Right cardiac atrium (tissue), 5 donors: ENCODE measurements at regions of chr9 and their contacts with region 1.

Region 1: GRCh38 chr9:109903515-109904138 is 123.6 kb downstream of the PALM2AKAP2 start:
- DNase-seq: peak in 2 of 3 donors; percentile 46 to 59
- ATAC-seq: peak in 1 of 2 donors; percentile 20
- H3K4me3 ChIP-seq: no peak overlapping the region
- H3K27ac ChIP-seq: no peak overlapping the region
- H3K4me1 ChIP-seq: peaks cover 5% of the 10 kb centered on the region
- H3K27me3 ChIP-seq: no peaks in the 10 kb centered on the region

Region 2: DNA sequence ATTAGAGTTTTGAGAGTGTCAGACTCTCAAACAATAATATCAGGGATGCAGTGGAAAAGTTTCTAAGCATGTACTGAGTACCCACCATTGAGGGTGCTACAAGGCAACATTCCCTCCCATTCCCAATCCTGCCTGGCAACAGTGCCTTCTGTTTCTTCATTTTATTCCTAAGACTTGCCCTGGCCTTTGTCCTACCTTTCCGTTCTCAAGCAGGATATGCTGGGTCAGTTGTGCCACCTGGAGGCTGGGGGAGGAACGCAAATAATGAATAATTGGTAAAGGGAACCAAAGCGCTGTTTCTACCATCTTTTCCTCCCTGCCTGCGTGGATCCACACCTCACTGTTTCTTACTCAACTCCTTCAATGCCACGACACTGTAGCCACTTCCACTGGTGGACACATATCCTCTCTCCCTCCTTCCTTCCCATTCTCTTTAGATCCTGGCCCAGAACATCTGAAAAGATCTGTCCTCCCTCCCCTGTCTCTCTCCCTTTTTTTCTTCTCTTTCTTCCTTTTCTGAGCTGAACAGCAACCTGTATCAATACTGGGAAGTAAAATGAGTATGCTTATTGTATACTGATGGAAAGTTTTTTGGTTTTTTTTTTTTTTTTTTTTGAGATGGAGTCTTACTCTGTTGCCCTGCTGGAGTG is 154.8 kb after region 1 on chr9:
- intact Hi-C with region 1: loop called in 2 of 4 experiments (anchors 10 kb)
- DNase-seq: peak in 2 of 3 donors; percentile 59 to 65
- ATAC-seq: peak; percentile 67 to 72
- H3K4me3 ChIP-seq: no peak overlapping the region
- H3K27ac ChIP-seq: no peak overlapping the region
- H3K4me1 ChIP-seq: no peaks in the 10 kb centered on the region
- H3K27me3 ChIP-seq: no peaks in the 10 kb centered on the region

Region 3: DNA sequence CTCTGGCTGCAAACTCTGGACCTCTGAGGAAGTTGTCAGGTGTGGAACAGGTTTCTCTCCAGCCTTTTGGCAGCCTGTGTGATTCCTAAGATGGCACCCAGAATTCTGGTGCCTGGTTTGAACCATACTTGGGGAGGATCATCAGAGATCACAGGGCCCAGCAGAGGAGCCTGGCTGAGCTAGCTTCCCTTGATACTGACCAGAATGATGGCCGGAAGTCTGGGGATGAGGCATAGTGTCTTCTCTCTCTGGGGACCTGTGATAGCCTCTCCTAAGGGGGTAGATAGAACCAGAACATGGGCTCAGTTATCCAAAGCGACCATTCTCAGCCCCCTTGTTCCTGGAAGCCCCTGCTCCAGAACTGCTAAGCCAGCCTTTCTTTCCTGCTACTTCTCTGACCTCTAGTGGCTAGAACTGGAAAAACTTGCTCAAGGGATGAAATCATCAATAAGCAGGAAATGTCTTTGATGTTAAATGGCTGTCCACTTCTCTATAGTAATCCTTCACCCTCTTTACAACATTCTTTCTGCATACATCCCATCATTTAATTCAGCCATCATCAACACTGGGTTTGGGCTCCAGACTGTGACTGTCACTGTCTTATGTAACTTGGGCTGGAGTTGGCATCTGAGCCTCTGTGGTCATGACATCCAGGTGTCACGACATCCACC is 249.2 kb after region 1 on chr9:
- intact Hi-C with region 1: loop called (anchors 2 to 10 kb)
- DNase-seq: peak in 1 of 3 donors; percentile 24
- ATAC-seq: peak in 1 of 2 donors; percentile 40
- H3K4me3 ChIP-seq: no peak overlapping the region
- H3K27ac ChIP-seq: peak overlapping the region; percentile 34
- H3K4me1 ChIP-seq: peaks cover 31% of the 10 kb centered on the region
- H3K27me3 ChIP-seq: no peaks in the 10 kb centered on the region

Region 4: DNA sequence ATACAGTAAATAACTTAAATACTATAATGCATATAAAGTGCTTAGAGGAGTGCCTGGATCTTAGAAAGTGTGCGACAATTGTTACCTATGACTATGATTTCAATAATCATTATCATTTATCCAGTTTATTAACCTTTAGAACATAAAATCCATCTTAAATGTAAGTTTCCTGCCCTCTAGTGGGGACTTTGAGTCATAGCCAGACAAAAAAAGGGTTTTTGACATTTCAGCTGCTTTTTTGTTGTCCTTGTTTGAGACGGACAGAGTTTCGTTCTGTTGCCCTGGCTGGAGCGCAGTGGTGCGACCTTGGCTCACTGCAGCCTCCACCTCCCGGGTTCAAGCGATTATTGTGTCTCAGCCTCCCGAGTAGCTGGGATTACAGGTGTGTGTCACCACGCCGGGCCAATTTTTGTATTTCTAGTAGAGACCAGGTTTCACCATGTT is 314.1 kb after region 1 on chr9:
- intact Hi-C with region 1: loop called in 1 of 4 experiments (anchors 5 kb)
- DNase-seq: no peak
- ATAC-seq: no peak
- H3K4me3 ChIP-seq: no peak overlapping the region
- H3K27ac ChIP-seq: no peak overlapping the region
- H3K4me1 ChIP-seq: no peaks in the 10 kb centered on the region
- H3K27me3 ChIP-seq: no peaks in the 10 kb centered on the region

Region 5: DNA sequence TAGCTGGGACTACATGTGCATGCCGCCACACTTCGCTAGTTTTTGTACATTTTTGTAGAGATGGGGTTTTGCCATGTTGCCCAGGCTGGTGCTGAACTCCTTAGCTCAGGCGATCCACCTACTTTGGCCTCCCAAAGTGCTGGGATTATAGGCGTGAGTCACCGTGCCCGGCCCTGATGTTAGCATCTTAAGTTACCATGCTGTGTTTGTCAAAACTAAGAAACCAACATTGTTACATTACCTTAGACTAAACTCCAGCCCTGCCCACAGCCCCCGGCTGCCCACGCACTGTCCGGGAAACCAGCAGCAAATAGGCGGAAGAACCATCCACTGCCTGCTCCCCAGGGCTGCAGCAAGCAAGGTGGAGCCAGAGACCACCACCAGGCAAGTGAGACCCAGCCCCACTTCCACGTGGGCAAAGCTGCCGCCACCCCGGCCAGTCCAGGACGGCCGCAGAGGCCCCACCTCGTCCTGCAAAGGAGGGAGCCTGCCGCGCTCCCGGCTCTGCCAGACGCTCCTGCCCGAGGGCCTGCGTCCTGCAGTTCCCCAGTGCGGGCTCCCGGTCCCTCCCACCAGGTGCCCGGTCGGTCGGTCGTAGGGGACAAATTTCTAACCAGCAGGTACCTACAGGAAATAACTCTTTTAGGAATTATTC is 388.4 kb after region 1 on chr9:
- intact Hi-C with region 1: no loop called
- DNase-seq: no peak
- ATAC-seq: no peak
- H3K4me3 ChIP-seq: no peak overlapping the region
- H3K27ac ChIP-seq: no peak overlapping the region
- H3K4me1 ChIP-seq: no peaks in the 10 kb centered on the region
- H3K27me3 ChIP-seq: no peaks in the 10 kb centered on the region